Activated CD4-positive, alpha-beta memory T cell treated with anti-CD3 and anti-CD28 coated beads for 36 hours (primary cell): ENCODE measurements at regions of chr20 and their contacts with region 1.

Region 1: GRCh38 chr20:2651772-2652723 is at the start of gene NOP56:
- DNase-seq: peak; percentile 95
- H3K4me3 Mint-ChIP-seq: peak within 1 kb of the TSS; percentile 90
- H3K27ac Mint-ChIP-seq: peak within 1 kb of the TSS; percentile 93
- H3K4me1 Mint-ChIP-seq: peaks cover 49% of the 10 kb centered on the region
- H3K27me3 Mint-ChIP-seq: no peaks in the 10 kb centered on the region
- total RNA-seq, gene NOP56: 402 to 408 TPM

Region 2: GRCh38 chr20:2508631-2509467 is 143.2 kb before region 1 on chr20 and contains the start of gene ZNF343:
- CTCF ChIA-PET with region 1: interaction called, 3 read pairs
- POLR2A ChIA-PET with region 1: no interaction called
- intact Hi-C with region 1: loop called (anchors 5 kb)
- DNase-seq: peak; percentile 86
- H3K4me3 Mint-ChIP-seq: peak within 1 kb of the TSS; percentile 100
- H3K27ac Mint-ChIP-seq: peak within 1 kb of the TSS; percentile 94
- H3K4me1 Mint-ChIP-seq: peaks cover 17% of the 10 kb centered on the region
- H3K27me3 Mint-ChIP-seq: peaks cover 8% of the 10 kb centered on the region
- total RNA-seq, gene ZNF343: 6.8 to 6.9 TPM

Region 3: GRCh38 chr20:2663887-2664719 is 12.1 kb after region 1 on chr20 and contains the start of gene IDH3B:
- CTCF ChIA-PET with region 1: no interaction called
- POLR2A ChIA-PET with region 1: interaction called, 68 read pairs
- intact Hi-C with region 1: loop called (anchors 1 kb)
- DNase-seq: peak; percentile 97
- H3K4me3 Mint-ChIP-seq: peak within 1 kb of the TSS; percentile 79
- H3K27ac Mint-ChIP-seq: peak within 1 kb of the TSS; percentile 94
- H3K4me1 Mint-ChIP-seq: peaks cover 20% of the 10 kb centered on the region
- H3K27me3 Mint-ChIP-seq: no peaks in the 10 kb centered on the region
- total RNA-seq, gene IDH3B: 95.6 to 99.1 TPM

Region 4: DNA sequence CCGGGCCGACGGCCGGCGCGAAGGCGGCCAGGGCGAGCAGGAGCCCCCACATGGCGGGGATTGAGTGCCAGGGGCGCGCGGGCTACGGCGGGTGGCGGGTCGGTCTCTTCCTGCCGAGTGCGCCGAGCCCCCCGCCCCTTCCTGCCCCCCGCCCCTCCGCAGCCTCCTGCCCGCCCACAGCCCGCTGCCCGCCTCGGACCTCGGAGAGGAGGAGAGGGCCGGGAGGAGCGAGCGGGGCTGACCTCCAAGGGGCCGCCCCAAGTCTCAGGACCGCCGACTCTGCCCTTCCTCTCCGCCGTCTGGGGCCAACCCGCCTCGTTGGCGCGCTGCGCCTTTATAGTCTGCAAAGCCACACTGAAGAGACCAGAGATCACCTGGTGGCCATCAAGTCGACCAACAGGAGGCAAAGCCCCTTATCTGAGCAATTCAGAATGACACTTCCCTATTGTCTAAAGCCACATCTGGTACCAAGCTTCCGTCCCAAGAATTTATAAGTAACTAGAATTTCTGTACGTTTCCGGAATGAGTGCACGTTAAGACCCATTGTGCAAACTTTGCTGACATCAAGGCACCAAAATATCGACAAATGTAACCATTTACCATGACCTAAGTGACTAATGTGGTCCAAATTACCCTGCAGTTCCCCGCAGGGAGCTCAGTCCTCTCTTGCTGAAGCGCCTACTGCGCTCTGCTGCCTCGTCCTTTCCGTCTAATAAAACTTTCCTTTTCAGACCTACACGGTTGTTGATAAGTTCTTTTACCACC is 148.7 kb after region 1 on chr20 and contains the start of gene CPXM1:
- CTCF ChIA-PET with region 1: no interaction called
- POLR2A ChIA-PET with region 1: no interaction called
- intact Hi-C with region 1: no loop called
- DNase-seq: peak; percentile 36
- H3K4me3 Mint-ChIP-seq: peak within 1 kb of the TSS; percentile 90
- H3K27ac Mint-ChIP-seq: peak within 1 kb of the TSS; percentile 49
- H3K4me1 Mint-ChIP-seq: peaks cover 16% of the 10 kb centered on the region
- H3K27me3 Mint-ChIP-seq: peaks cover 59% of the 10 kb centered on the region
- total RNA-seq, gene CPXM1: 2.3 to 2.9 TPM